Caco-2 (cell line): ENCODE measurements at regions of chr12 and their contacts with region 1.

Region 1: GRCh38 chr12:7832059-7832696 is 40.5 kb downstream of the SLC2A14 start:
- DNase-seq: peak; percentile 80 to 85
- H3K4me3 ChIP-seq: no peak overlapping the region
- H3K4me3 Mint-ChIP-seq: peak overlapping the region; percentile 1
- H3K27ac Mint-ChIP-seq: peak overlapping the region; percentile 60
- H3K4me1 ChIP-seq: peaks cover 61% of the 10 kb centered on the region
- H3K4me1 Mint-ChIP-seq: peaks cover 51% of the 10 kb centered on the region
- H3K27me3 ChIP-seq: no peaks in the 10 kb centered on the region
- H3K27me3 Mint-ChIP-seq: no peaks in the 10 kb centered on the region
- CTCF ChIP-seq: peak; percentile 73 to 86

Region 2: GRCh38 chr12:7460375-7461259 is 371.6 kb before region 1 on chr12:
- CTCF ChIA-PET with region 1: no interaction called
- POLR2A ChIA-PET with region 1: no interaction called
- intact Hi-C with region 1: no loop called
- DNase-seq: peak; percentile 64 to 82
- H3K4me3 ChIP-seq: no peak overlapping the region
- H3K4me3 Mint-ChIP-seq: no peak overlapping the region
- H3K27ac Mint-ChIP-seq: no peak overlapping the region
- H3K4me1 ChIP-seq: no peaks in the 10 kb centered on the region
- H3K4me1 Mint-ChIP-seq: no peaks in the 10 kb centered on the region
- H3K27me3 ChIP-seq: no peaks in the 10 kb centered on the region
- H3K27me3 Mint-ChIP-seq: peaks cover 4% of the 10 kb centered on the region
- CTCF ChIP-seq: peak; percentile 98 to 99

Region 3: DNA sequence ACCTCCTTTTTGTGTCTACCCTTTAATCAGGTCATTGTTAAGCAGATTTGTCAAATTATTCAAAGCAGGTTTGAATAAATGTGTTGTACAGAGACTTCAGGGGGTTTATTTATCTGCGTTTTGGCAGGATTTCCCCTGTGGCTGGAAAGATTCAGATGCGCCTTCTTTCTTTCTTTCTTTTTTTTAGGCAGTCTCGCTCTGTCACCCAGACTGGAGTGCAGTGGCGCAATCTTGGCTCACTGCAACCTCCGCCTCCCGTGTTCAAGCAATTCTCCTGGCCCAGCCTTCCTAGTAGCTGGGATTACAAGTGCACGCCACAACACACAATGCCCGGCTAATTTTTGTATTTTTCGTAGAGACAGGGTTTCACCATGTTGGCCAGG is 73.4 kb before region 1 on chr12:
- CTCF ChIA-PET with region 1: no interaction called
- POLR2A ChIA-PET with region 1: no interaction called
- intact Hi-C with region 1: no loop called
- DNase-seq: no peak
- H3K4me3 ChIP-seq: no peak overlapping the region
- H3K4me3 Mint-ChIP-seq: no peak overlapping the region
- H3K27ac Mint-ChIP-seq: no peak overlapping the region
- H3K4me1 ChIP-seq: 0 out of 2 replicates have a peak, but pooled peaks cover 7% of the 10 kb centered on the region
- H3K4me1 Mint-ChIP-seq: peaks cover 6% of the 10 kb centered on the region
- H3K27me3 ChIP-seq: no peaks in the 10 kb centered on the region
- H3K27me3 Mint-ChIP-seq: no peaks in the 10 kb centered on the region
- CTCF ChIP-seq: no peak

Region 4: GRCh38 chr12:7797698-7798398 is 34.3 kb before region 1 on chr12:
- CTCF ChIA-PET with region 1: no interaction called
- POLR2A ChIA-PET with region 1: no interaction called
- intact Hi-C with region 1: no loop called
- DNase-seq: no peak
- H3K4me3 ChIP-seq: no peak overlapping the region
- H3K4me3 Mint-ChIP-seq: no peak overlapping the region
- H3K27ac Mint-ChIP-seq: peak overlapping the region; percentile 39
- H3K4me1 ChIP-seq: no peaks in the 10 kb centered on the region
- H3K4me1 Mint-ChIP-seq: peaks cover 12% of the 10 kb centered on the region
- H3K27me3 ChIP-seq: no peaks in the 10 kb centered on the region
- H3K27me3 Mint-ChIP-seq: no peaks in the 10 kb centered on the region
- CTCF ChIP-seq: no peak

Region 5: DNA sequence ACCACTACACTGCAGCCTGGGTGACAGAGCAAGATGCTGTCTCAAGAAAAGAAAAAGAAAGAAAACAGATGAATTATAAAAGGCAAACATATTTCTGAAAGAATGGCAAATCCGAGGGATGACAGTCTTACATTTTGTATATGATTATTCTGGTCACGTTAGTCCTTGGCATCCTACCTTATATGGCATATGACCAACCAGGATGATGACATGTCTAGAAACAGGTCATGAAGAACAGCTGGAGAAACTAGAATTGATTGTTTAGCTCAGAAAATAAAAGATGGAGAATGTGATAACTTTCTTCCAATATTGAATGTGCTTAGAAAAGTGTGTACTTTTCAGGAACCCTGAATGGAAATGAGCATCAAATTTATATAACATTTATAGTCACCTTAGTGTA is 21.4 kb after region 1 on chr12:
- CTCF ChIA-PET with region 1: interaction called, 16 read pairs
- POLR2A ChIA-PET with region 1: interaction called, 29 read pairs
- intact Hi-C with region 1: loop called (anchors 1 kb)
- DNase-seq: no peak
- H3K4me3 ChIP-seq: no peak overlapping the region
- H3K4me3 Mint-ChIP-seq: no peak overlapping the region
- H3K27ac Mint-ChIP-seq: peak overlapping the region; percentile 92
- H3K4me1 ChIP-seq: peaks cover 83% of the 10 kb centered on the region
- H3K4me1 Mint-ChIP-seq: peaks cover 69% of the 10 kb centered on the region
- H3K27me3 ChIP-seq: no peaks in the 10 kb centered on the region
- H3K27me3 Mint-ChIP-seq: no peaks in the 10 kb centered on the region
- CTCF ChIP-seq: no peak

Region 6: DNA sequence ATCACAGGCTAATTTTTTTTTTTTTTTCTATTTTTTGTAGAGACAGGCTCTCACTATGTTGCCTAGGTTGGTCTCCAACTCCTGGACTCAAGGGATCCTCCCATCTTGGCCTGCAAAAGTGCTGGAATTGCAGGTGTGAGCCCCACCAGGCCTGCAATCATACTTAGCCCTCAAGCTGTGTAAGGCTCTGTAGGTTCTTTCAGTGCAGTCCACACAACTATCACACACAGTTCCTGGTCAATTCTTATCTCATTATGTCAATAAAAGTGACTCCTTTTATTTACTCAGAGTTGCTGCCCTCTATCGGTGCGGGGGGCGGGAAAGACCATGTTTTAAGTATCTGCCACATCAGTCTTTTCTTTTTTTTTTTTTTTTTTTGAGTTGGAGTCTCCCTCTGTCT is 74.8 kb after region 1 on chr12:
- CTCF ChIA-PET with region 1: interaction called, 9 read pairs
- POLR2A ChIA-PET with region 1: interaction called, 3 read pairs
- intact Hi-C with region 1: loop called (anchors 1 kb)
- DNase-seq: peak; percentile 96 to 98
- H3K4me3 ChIP-seq: no peak overlapping the region
- H3K4me3 Mint-ChIP-seq: peak overlapping the region; percentile 54
- H3K27ac Mint-ChIP-seq: peak overlapping the region; percentile 98
- H3K4me1 ChIP-seq: peaks cover 34% of the 10 kb centered on the region
- H3K4me1 Mint-ChIP-seq: peaks cover 38% of the 10 kb centered on the region
- H3K27me3 ChIP-seq: no peaks in the 10 kb centered on the region
- H3K27me3 Mint-ChIP-seq: no peaks in the 10 kb centered on the region
- CTCF ChIP-seq: peak; percentile 81 to 83

Region 7: DNA sequence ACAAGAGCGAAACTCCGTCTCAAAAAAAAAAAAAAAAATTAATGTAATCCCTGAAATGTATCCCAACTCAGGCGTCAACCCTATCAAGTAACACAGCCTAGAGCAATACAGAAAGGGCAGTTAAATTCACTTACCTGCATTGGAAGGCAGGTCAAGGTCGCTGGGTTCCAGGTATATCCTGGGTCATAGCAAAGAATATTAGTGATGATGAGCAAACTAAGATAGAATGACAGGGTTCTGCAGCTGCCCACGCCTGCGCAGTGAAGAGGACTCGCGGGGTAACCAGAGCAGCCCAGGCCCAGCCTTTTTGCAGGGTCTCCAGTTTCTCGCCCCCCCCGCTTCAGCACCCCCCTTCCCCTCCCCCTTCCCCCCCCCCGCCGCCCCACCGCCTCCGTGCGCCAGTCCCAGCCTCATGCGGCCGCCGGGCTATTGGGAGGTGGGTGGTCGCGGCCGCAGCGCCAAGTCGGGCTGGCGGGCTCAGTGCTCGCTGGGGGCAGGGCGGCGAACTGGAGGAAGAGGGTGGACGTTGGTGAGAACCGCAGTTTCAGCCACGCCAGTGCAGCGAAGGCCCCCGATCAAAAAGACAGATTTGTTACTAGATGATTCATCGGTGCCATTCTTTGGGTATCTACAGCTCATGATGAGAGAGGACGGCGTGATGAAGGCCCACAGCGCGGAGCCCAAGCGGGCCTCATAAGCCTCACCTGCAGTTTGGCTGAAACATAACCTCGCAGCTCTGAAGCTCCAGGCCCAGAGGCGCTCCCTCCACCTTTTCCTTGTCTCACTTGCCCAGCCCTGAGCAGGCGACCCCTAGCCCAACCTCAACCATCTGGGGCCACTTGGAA is 83.6 kb after region 1 on chr12:
- CTCF ChIA-PET with region 1: interaction called, 3 read pairs
- POLR2A ChIA-PET with region 1: interaction called, 5 read pairs
- intact Hi-C with region 1: loop called (anchors 1 kb)
- DNase-seq: peak; percentile 62 to 78
- H3K4me3 ChIP-seq: no peak overlapping the region
- H3K4me3 Mint-ChIP-seq: peak overlapping the region; percentile 43
- H3K27ac Mint-ChIP-seq: peak overlapping the region; percentile 73
- H3K4me1 ChIP-seq: peaks cover 15% of the 10 kb centered on the region
- H3K4me1 Mint-ChIP-seq: peaks cover 62% of the 10 kb centered on the region
- H3K27me3 ChIP-seq: no peaks in the 10 kb centered on the region
- H3K27me3 Mint-ChIP-seq: peaks cover 3% of the 10 kb centered on the region
- CTCF ChIP-seq: no peak